CD4-positive, alpha-beta memory T cell (primary cell): ENCODE measurements at regions of chr4 and their contacts with region 1.

Region 1: DNA sequence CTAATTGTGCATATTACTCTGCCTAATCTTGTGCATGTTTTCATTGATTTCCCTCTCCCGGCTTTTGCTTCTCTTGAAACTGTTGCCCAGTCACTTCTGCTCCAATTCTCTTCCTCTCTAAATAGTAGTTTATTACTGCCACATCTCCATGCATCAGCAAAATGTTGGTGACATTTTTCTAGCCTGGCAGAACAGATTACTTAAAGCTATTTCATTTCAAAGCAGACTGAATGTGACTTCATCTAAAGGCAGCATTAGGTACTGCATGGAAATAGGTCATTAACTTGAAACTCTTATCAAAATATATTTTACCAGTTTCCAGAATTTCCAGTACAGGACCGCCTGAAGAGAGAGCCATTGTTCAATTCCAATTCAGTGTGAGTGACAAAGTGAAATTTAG is 52.4 kb downstream of the HPGDS start:
- DNase-seq: no peak
- H3K4me3 ChIP-seq: no peak overlapping the region
- H3K4me3 Mint-ChIP-seq: no peak overlapping the region
- H3K27ac ChIP-seq: no peak overlapping the region
- H3K27ac Mint-ChIP-seq: peak overlapping the region in 1 of 7 donors; percentile 12
- H3K4me1 ChIP-seq: no peaks in the 10 kb centered on the region
- H3K4me1 Mint-ChIP-seq: peaks cover 0 to 2% (median 0%) of the 10 kb centered on the region in 4 donors
- H3K27me3 ChIP-seq: no peaks in the 10 kb centered on the region
- H3K27me3 Mint-ChIP-seq: no peaks in the 10 kb centered on the region

Region 2: GRCh38 chr4:93791570-93792195 is 498.6 kb before region 1 on chr4:
- CTCF ChIA-PET with region 1: no interaction called
- POLR2A ChIA-PET with region 1: no interaction called
- intact Hi-C with region 1: no loop called
- DNase-seq: no peak
- H3K4me3 ChIP-seq: no peak overlapping the region
- H3K4me3 Mint-ChIP-seq: no peak overlapping the region
- H3K27ac ChIP-seq: no peak overlapping the region
- H3K27ac Mint-ChIP-seq: no peak overlapping the region
- H3K4me1 ChIP-seq: no peaks in the 10 kb centered on the region
- H3K4me1 Mint-ChIP-seq: no peaks in the 10 kb centered on the region
- H3K27me3 ChIP-seq: no peaks in the 10 kb centered on the region
- H3K27me3 Mint-ChIP-seq: peaks cover 0 to 1% of the 10 kb centered on the region in 2 donors

Region 3: DNA sequence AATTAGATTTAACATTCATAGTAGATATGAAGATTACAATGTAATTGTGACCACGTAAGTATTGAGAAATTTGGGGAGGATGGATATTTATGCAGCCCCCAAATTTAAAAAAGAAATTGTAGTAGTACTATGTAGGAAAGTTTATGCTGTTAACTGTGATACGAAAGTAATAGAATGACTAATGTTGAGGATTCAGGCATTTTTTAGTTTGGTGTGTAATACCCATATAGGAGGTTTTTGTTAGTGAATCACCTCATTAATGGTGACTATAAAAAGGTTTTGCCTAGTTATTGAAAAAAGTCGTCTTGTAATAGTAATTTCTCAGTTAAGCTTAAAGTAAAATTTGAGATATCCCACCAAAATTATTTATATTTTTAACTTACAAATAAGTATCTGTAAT is 15.3 kb before region 1 on chr4:
- CTCF ChIA-PET with region 1: no interaction called
- POLR2A ChIA-PET with region 1: no interaction called
- intact Hi-C with region 1: loop called (anchors 2 kb)
- DNase-seq: no peak
- H3K4me3 ChIP-seq: no peak overlapping the region
- H3K4me3 Mint-ChIP-seq: no peak overlapping the region
- H3K27ac ChIP-seq: no peak overlapping the region
- H3K27ac Mint-ChIP-seq: no peak overlapping the region
- H3K4me1 ChIP-seq: no peaks in the 10 kb centered on the region
- H3K4me1 Mint-ChIP-seq: no peaks in the 10 kb centered on the region
- H3K27me3 ChIP-seq: no peaks in the 10 kb centered on the region
- H3K27me3 Mint-ChIP-seq: no peaks in the 10 kb centered on the region

Region 4: GRCh38 chr4:95013236-95013635 is 723.0 kb after region 1 on chr4:
- CTCF ChIA-PET with region 1: no interaction called
- POLR2A ChIA-PET with region 1: no interaction called
- intact Hi-C with region 1: no loop called
- DNase-seq: no peak
- H3K4me3 ChIP-seq: no peak overlapping the region
- H3K4me3 Mint-ChIP-seq: no peak overlapping the region
- H3K27ac ChIP-seq: no peak overlapping the region
- H3K27ac Mint-ChIP-seq: no peak overlapping the region
- H3K4me1 ChIP-seq: no peaks in the 10 kb centered on the region
- H3K4me1 Mint-ChIP-seq: no peaks in the 10 kb centered on the region
- H3K27me3 ChIP-seq: no peaks in the 10 kb centered on the region
- H3K27me3 Mint-ChIP-seq: peaks cover 0 to 3% of the 10 kb centered on the region in 2 donors